H1 (cell line): ENCODE measurements at regions of chr15 and their contacts with region 1.

Region 1: GRCh38 chr15:41465822-41466421 is 27.8 kb upstream of the ITPKA start:
- DNase-seq: no peak
- H3K4me3 ChIP-seq: no peak overlapping the region
- H3K27ac ChIP-seq: no peak overlapping the region
- H3K4me1 ChIP-seq: no peaks in the 10 kb centered on the region
- H3K27me3 ChIP-seq: no peaks in the 10 kb centered on the region
- CTCF ChIP-seq: peak in 2 of 3 experiments; percentile 54 to 89; a peak in 2 of 4 replicates
- EP300 ChIP-seq: no peak
- POLR2A ChIP-seq: no peak
- RAD21 ChIP-seq: peak; percentile 82 to 83

Region 2: DNA sequence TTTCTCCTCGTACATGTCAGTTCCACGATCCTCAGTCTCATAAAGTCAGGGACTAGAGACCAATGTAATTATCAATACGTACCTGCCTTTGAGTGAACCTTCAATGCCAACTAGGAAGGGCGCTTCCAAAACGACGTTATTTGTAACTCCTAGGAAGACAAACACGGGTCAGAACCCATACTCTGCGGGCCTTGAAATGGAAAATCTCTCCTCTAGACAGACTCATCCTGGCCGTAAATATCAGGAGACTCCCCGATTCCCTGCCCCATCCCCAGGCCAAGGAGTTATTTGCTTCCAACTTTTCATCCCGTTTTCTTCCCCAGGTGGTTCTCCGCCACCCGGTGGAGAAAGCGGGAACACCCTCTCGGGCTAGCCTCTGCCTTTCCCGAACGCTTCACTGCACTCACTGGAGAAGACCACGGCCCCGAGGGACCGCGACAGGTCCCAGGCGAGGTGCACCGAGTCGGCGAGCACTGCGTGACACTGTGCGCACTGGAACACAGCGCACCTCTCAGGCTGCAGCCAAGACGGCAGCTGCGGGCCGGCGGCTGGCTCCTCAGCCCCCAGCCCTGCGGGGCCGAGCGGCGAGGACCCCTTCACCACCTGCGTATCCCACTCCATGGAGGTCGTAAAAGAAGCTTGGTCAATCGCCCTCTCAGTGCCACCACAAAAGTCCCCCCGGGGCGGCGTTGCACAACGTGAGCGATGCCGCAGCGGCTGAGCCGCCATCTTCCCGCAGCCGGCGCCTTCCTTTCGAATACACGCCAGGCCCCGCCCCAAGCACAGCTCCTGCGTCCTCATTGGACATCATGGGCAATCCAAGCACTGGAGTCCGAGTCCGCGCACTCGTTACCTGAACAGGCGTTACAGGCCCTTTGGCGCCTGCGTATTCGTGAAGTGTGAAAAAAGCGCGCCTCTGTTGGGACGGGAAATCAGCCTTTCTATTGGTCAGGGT is 133.8 kb before region 1 on chr15 and contains the start of gene OIP5:
- CTCF ChIA-PET with region 1: no interaction called
- POLR2A ChIA-PET with region 1: no interaction called
- DNase-seq: peak; percentile 93 to 98
- H3K4me3 ChIP-seq: peak within 1 kb of the TSS; percentile 83 to 92 (median 90)
- H3K27ac ChIP-seq: peak within 1 kb of the TSS; percentile 90
- H3K4me1 ChIP-seq: no peaks in the 10 kb centered on the region; a peak in 1 of 7 replicates
- H3K27me3 ChIP-seq: no peaks in the 10 kb centered on the region
- CTCF ChIP-seq: peak; percentile 61 to 69 (median 62)
- EP300 ChIP-seq: no peak
- POLR2A ChIP-seq: peak; percentile 96 to 98
- RAD21 ChIP-seq: peak; percentile 59 to 61
- total RNA-seq, gene OIP5: 34.8 and 36.7 TPM in 2 replicates

Region 3: DNA sequence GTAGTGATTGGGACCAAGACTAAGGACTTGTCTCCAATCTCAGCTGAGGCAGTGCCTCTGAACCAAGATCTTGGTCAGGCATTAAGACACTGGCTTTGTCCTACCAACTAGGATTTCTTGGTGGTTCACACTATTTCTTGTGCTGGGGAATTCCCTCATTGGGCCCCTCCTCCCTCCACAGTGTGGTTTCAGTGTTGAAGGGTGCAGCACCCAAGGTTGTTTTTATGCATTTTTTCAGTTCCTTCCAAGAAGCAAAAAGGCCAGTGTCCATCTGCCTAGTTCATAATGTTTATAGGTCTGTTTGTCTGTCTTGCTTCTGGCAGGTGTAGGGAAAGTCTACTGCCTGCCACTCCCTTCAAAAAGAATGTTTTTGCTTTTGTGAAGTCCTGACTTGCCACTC is 17.2 kb after region 1 on chr15:
- CTCF ChIA-PET with region 1: interaction called, 30 read pairs
- POLR2A ChIA-PET with region 1: no interaction called
- DNase-seq: no peak
- H3K4me3 ChIP-seq: no peak overlapping the region
- H3K27ac ChIP-seq: no peak overlapping the region
- H3K4me1 ChIP-seq: no peaks in the 10 kb centered on the region; a peak in 1 of 7 replicates
- H3K27me3 ChIP-seq: no peaks in the 10 kb centered on the region; a peak in 2 of 7 replicates
- CTCF ChIP-seq: no peak
- EP300 ChIP-seq: no peak
- POLR2A ChIP-seq: no peak
- RAD21 ChIP-seq: no peak

Region 4: GRCh38 chr15:41493205-41493901 is 27.4 kb after region 1 on chr15 and contains the start of gene ITPKA:
- CTCF ChIA-PET with region 1: interaction called, 12 read pairs
- POLR2A ChIA-PET with region 1: interaction called, 4 read pairs
- DNase-seq: peak in 1 of 2 experiments; percentile 85
- H3K4me3 ChIP-seq: peak within 1 kb of the TSS; percentile 42 to 78 (median 54)
- H3K27ac ChIP-seq: no peak within 1 kb of the TSS
- H3K4me1 ChIP-seq: peaks cover 0 to 15% (median 8%) of the 10 kb centered on the region in 4 experiments; a peak in 6 of 7 replicates
- H3K27me3 ChIP-seq: peaks cover 56 to 78% (median 75%) of the 10 kb centered on the region in 4 experiments
- CTCF ChIP-seq: no peak
- EP300 ChIP-seq: no peak
- POLR2A ChIP-seq: no peak
- RAD21 ChIP-seq: no peak
- total RNA-seq, gene ITPKA: 0.67 and 0.99 TPM in 2 replicates

Region 5: DNA sequence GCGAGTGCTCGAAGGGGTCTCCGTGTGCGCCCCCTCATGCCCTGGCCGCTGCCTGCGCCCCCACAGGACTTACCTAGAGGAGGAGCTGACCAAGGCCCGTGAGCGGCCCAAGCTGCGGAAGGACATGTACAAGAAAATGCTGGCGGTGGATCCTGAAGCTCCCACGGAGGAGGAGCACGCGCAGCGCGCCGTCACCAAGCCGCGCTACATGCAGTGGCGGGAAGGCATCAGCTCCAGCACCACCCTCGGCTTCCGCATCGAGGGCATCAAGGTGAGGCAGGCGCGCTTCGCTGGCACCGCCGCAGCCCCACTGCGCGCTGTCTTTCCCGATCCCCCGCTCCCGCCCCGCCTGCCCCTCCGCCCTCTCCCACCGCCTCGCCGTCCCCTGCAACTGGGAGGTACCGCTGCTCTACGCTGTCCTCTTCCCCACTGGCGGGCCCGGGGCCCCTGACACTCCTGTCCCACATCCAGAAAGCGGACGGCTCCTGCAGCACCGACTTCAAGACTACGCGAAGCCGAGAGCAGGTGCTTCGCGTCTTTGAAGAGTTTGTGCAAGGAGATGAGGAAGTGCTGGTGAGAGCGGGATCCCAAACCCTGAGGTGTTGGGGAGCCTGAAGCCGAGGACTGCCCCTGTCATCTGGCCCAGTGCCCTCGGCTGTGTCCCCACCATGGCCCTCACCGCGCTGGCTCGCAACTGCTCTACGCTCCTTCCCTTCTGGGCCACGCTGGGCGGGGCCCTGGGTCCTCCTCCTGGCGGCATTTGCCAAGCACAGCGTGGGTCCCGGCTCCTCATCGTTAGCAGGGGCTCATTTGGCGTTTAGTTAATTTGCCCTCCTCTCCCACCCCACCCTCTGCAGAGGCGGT is 36.2 kb after region 1 on chr15:
- CTCF ChIA-PET with region 1: interaction called, 46 read pairs
- POLR2A ChIA-PET with region 1: no interaction called
- DNase-seq: no peak
- H3K4me3 ChIP-seq: peak overlapping the region; percentile 21 to 53 (median 30); a peak in 7 of 8 replicates
- H3K27ac ChIP-seq: no peak overlapping the region
- H3K4me1 ChIP-seq: peaks cover 0 to 19% (median 12%) of the 10 kb centered on the region in 4 experiments; a peak in 6 of 7 replicates
- H3K27me3 ChIP-seq: peaks cover 63 to 95% (median 91%) of the 10 kb centered on the region in 4 experiments
- CTCF ChIP-seq: no peak
- EP300 ChIP-seq: no peak
- POLR2A ChIP-seq: no peak
- RAD21 ChIP-seq: no peak

Region 6: GRCh38 chr15:41512940-41513510 is 47.1 kb after region 1 on chr15:
- CTCF ChIA-PET with region 1: interaction called, 46 read pairs
- POLR2A ChIA-PET with region 1: no interaction called
- DNase-seq: peak in 1 of 2 experiments; percentile 77
- H3K4me3 ChIP-seq: peak overlapping the region; percentile 33 to 65 (median 58); a peak in 7 of 8 replicates
- H3K27ac ChIP-seq: no peak overlapping the region
- H3K4me1 ChIP-seq: peaks cover 0 to 26% (median 13%) of the 10 kb centered on the region in 4 experiments; a peak in 5 of 7 replicates
- H3K27me3 ChIP-seq: peaks cover 32 to 61% (median 54%) of the 10 kb centered on the region in 4 experiments
- CTCF ChIP-seq: no peak
- EP300 ChIP-seq: no peak
- POLR2A ChIP-seq: no peak
- RAD21 ChIP-seq: no peak